Breast epithelium (tissue), 4 donors: ENCODE measurements at regions of chr5 and their contacts with region 1.

Region 1: DNA sequence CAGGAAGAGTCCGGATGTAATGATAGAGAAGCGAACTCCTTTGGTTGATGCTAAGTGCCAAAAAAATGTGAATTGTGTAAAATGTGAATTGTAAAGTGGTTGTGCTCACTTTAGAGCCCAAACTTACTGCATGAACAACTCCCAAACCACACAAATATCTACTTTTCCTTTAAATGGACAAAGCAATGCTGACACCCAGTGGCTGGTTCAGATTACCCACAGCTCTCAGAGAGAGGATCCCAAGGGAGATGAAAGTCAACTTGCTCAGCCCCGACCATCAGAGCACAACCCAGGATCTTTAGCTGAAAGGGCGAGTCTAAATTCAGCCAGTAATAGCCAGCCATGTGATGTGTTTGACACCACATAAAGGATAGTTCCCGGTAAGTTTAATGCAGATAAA is 133.7 kb downstream of the NMUR2 start:
- DNase-seq: peak in 1 of 2 donors; percentile 19
- H3K4me3 ChIP-seq: no peak overlapping the region
- H3K27ac ChIP-seq: no peak overlapping the region
- H3K4me1 ChIP-seq: peaks cover 3 to 6% of the 10 kb centered on the region in 2 donors
- H3K27me3 ChIP-seq: no peaks in the 10 kb centered on the region
- CTCF ChIP-seq: peak in 2 of 3 donors; percentile 27 to 41
- POLR2A ChIP-seq: no peak

Region 2: GRCh38 chr5:151562019-151562707 is 709.3 kb before region 1 on chr5:
- intact Hi-C with region 1: no loop called
- DNase-seq: no peak
- H3K4me3 ChIP-seq: no peak overlapping the region
- H3K27ac ChIP-seq: peak overlapping the region in 1 of 2 donors; percentile 32
- H3K4me1 ChIP-seq: no peaks in the 10 kb centered on the region
- H3K27me3 ChIP-seq: no peaks in the 10 kb centered on the region
- CTCF ChIP-seq: no peak
- POLR2A ChIP-seq: no peak

Region 3: DNA sequence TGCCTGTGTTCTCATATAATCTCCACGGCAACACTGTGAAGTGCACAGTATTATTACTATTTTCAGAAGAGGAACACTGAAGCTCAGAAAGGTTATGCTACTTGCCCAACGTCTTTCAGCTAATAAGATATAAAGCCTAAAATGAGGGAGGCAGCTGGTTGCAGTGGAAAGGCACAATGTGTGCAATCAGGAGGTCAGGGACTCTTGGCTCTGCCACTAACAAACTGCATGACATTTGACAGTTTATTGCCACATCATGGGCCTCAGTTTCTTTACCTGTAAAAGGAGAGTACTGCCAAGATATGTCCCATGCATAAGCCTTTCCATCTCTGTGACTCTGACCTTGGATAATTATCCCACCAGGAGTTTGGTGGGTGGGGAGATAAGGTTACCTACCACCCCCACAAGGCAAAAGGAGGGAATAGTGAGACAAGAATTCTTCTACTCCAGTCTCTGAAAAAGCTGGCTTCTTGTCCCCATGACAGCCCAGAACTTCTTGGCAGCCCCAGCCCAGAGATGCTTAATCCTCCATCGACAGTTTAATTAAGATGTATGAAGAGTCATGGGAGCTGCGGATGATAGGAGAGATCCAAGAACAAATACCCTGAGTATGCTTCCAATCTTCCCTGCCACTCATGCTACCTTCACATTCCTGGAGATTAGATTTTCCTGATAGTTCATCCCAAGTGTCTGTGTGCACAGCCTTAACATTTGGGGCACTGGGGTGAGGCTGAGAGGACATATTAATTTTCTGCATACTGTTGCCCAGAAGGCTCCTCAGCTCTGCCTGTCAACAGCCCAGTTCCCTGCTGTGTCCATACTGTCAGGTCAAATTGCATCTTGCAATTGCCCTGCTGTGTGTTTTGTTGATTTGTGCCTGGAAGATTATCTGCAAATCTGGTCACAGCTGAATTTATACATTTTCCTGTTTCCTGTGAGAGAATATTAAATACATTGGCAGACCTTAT is 1496.1 kb after region 1 on chr5:
- intact Hi-C with region 1: loop called (anchors 5 kb)
- DNase-seq: no peak
- H3K4me3 ChIP-seq: no peak overlapping the region
- H3K27ac ChIP-seq: no peak overlapping the region
- H3K4me1 ChIP-seq: no peaks in the 10 kb centered on the region
- H3K27me3 ChIP-seq: no peaks in the 10 kb centered on the region
- CTCF ChIP-seq: no peak
- POLR2A ChIP-seq: no peak